A673 (cell line): ENCODE measurements at regions of chr12 and their contacts with region 1.

Region 1: DNA sequence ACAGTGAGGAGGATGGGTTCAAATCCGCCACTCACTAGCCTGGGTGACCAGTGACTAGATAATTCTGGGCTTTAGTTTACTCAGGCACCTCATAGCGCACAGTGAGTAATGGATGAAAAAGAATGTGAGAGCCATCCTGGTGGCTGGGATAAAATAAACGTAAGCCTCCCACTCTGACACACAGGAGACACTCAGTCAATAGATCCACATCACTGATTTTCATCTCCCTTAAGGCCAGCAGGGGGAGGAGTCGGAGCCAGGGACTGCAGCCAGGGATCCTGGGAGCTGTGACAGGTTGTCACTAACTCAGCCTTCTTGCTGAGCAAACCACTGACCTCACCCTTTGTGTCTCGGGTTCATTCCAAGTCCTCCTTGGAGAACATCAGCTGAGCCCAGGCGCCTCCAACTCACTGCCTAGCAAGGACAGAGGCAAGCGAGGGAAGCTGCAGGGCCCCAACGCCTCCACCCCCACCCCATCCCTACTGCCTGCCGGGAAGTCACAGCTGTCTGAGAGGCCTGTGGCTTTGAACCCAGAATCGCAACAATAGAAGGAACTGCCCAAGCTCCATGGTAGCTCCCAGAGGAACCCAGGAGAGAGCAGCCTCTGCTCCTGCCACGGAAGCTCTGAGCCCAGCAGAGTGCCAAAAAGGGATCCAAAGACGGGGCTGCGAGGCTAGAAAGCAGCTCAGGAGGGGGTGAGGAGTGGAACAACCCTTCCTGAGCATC is 30.7 kb downstream of the PXN start:
- DNase-seq: peak; percentile 88
- H3K4me3 ChIP-seq: no peak overlapping the region
- H3K27ac ChIP-seq: peak overlapping the region; percentile 38
- H3K4me1 ChIP-seq: peaks cover 76% of the 10 kb centered on the region
- H3K27me3 ChIP-seq: no peaks in the 10 kb centered on the region
- CTCF ChIP-seq: peak; percentile 62

Region 2: DNA sequence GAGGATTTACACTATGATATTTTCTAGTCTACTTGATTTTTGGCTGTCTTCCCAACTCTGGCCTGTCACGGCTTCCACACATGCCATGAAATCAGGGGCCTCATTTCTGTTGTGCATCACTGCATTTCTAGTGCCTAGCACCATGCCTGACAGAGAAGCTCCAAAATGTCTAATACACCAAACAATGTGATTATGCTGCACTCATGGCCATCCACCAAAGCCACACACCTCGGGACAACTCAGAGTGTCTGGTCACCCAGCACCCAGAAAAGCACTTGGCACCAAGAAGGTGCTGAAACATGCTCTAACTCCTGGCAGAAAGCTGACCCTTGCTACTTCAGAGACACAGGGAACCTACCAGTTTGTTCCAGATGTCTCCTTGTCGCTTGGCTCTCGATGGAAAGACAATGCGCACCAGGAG is 51.6 kb before region 1 on chr12:
- CTCF ChIA-PET with region 1: interaction called, 15 read pairs
- POLR2A ChIA-PET with region 1: no interaction called
- intact Hi-C with region 1: no loop called
- DNase-seq: peak; percentile 35
- H3K4me3 ChIP-seq: no peak overlapping the region
- H3K27ac ChIP-seq: no peak overlapping the region
- H3K4me1 ChIP-seq: peaks cover 8% of the 10 kb centered on the region
- H3K27me3 ChIP-seq: no peaks in the 10 kb centered on the region
- CTCF ChIP-seq: no peak

Region 3: GRCh38 chr12:120257041-120257821 is 22.4 kb after region 1 on chr12:
- CTCF ChIA-PET with region 1: interaction called, 141 read pairs
- POLR2A ChIA-PET with region 1: interaction called, 3 read pairs
- intact Hi-C with region 1: no loop called
- DNase-seq: peak; percentile 87
- H3K4me3 ChIP-seq: no peak overlapping the region
- H3K27ac ChIP-seq: peak overlapping the region; percentile 61
- H3K4me1 ChIP-seq: peaks cover 11% of the 10 kb centered on the region
- H3K27me3 ChIP-seq: no peaks in the 10 kb centered on the region
- CTCF ChIP-seq: no peak

Region 4: GRCh38 chr12:120265473-120266179 is 30.8 kb after region 1 on chr12 and contains the start of gene PXN:
- CTCF ChIA-PET with region 1: interaction called, 141 read pairs
- POLR2A ChIA-PET with region 1: no interaction called
- intact Hi-C with region 1: no loop called
- DNase-seq: peak; percentile 86
- H3K4me3 ChIP-seq: peak within 1 kb of the TSS; percentile 80
- H3K27ac ChIP-seq: peak within 1 kb of the TSS; percentile 71
- H3K4me1 ChIP-seq: peaks cover 28% of the 10 kb centered on the region
- H3K27me3 ChIP-seq: no peaks in the 10 kb centered on the region
- CTCF ChIP-seq: peak; percentile 74
- total RNA-seq, gene PXN: 110 and 127 TPM in 2 replicates

Region 5: DNA sequence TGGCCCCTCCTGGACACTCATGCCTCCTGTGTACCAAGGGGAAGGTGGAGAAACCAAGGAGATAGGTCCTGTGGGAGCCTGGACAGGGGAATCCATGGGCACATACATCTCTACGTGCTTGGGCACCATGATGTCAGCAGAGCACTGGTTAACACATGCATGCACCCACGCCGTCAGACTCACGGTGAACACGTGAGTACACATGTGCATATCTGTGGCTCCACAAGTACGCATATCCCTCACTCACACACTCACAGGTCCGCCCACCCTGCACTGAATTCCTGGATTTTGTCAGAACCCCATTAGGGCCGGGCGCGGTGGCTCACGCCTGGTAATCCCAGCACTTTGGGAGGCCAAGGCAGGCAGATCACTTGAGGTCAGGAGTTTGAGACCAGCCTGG is 174.0 kb after region 1 on chr12:
- CTCF ChIA-PET with region 1: no interaction called
- POLR2A ChIA-PET with region 1: no interaction called
- intact Hi-C with region 1: no loop called
- DNase-seq: no peak
- H3K4me3 ChIP-seq: no peak overlapping the region
- H3K27ac ChIP-seq: no peak overlapping the region
- H3K4me1 ChIP-seq: no peaks in the 10 kb centered on the region
- H3K27me3 ChIP-seq: no peaks in the 10 kb centered on the region
- CTCF ChIP-seq: no peak